Aorta (tissue), 5 donors: ENCODE measurements at regions of chr5 and their contacts with region 1.

Region 1: GRCh38 chr5:34533582-34534522 is 122.3 kb upstream of the RAI14 start:
- DNase-seq: no peak
- ATAC-seq: no peak
- H3K4me3 ChIP-seq: no peak overlapping the region
- H3K27ac ChIP-seq: peak overlapping the region; percentile 90 to 97
- H3K4me1 ChIP-seq: peaks cover 6 to 11% of the 10 kb centered on the region in 2 donors
- H3K27me3 ChIP-seq: no peaks in the 10 kb centered on the region

Region 2: GRCh38 chr5:34608859-34609648 is 75.2 kb after region 1 on chr5:
- intact Hi-C with region 1: loop called (anchors 5 to 10 kb)
- DNase-seq: no peak
- ATAC-seq: peak; percentile 75
- H3K4me3 ChIP-seq: no peak overlapping the region
- H3K27ac ChIP-seq: peak overlapping the region in 1 of 2 donors; percentile 51
- H3K4me1 ChIP-seq: peaks cover 3 to 9% of the 10 kb centered on the region in 2 donors
- H3K27me3 ChIP-seq: no peaks in the 10 kb centered on the region